Activated T-helper 1 cell treated with anti-CD3 and anti-CD28 coated beads, Interleukin-12 subunit alpha, Interleukin-12 subunit beta, Interleukin-2, Interleukin-4 antibody, amounts not matched to agents 30 ng/mL and 10 ng/mL and 1 ng/mL, durations not matched to agents 14 hours and 24 hours and 36 hours (primary cell): ENCODE measurements at regions of chr17 and their contacts with region 1.

Region 1: GRCh38 chr17:7214300-7215135 is 5.1 kb downstream of the DLG4 start:
- DNase-seq: peak; percentile 99
- H3K4me3 Mint-ChIP-seq: peak overlapping the region; percentile 91
- H3K27ac Mint-ChIP-seq: peak overlapping the region; percentile 98
- H3K4me1 Mint-ChIP-seq: peaks cover 55% of the 10 kb centered on the region
- H3K27me3 Mint-ChIP-seq: peaks cover 14% of the 10 kb centered on the region

Region 2: GRCh38 chr17:7234083-7234951 is 19.8 kb after region 1 on chr17 and contains the start of gene DVL2:
- intact Hi-C with region 1: loop called (anchors 1 kb)
- DNase-seq: peak; percentile 93
- H3K4me3 Mint-ChIP-seq: peak within 1 kb of the TSS; percentile 91
- H3K27ac Mint-ChIP-seq: peak within 1 kb of the TSS; percentile 92
- H3K4me1 Mint-ChIP-seq: peaks cover 46% of the 10 kb centered on the region
- H3K27me3 Mint-ChIP-seq: no peaks in the 10 kb centered on the region
- total RNA-seq, gene DVL2: 70.0 and 73.5 TPM in 2 replicates

Region 3: DNA sequence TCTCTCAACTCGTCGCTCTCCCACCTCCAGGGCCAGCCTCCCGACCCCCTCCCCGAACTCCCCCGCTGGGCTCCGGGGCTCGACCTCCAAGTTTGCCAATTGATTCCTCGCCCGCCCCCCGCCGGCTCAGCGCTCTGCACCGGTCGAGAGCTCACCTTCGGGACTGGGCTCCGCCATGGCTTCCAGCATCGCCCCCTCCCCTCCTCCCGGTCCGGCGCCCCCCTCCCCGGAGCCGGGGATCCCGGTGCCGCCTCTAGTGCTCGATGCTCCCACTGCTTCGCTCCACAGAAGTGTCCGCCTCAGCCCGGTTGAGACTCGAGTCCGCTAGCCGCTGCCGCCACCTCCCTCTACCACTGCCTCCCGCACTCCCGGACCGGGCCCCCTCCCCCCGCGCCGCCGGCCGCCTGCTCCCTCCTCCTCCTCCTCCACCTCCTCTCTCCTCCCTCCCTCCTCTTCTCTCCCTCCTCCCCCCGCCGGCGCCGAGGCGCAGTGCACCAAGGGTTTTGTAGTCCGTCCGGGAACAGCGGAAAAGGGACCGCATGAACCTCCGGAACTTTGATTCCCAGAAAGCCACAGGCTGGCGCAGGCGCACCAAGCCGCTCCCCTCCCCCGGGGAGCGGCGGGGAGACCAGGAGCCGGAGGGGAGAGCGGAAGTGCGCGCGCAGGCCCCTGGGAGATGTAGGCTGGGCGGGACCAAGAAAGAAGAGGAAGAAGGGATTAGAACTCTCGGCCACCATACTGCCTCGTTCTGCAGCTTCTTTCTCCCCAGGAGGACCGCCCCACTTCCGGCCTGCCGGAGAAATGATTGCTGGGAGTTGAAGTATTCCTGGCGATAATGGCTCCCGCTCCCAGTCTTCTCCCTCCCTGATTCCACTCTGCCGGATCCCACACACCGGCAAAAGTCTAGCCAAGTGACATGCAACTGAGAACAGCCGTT is 24.8 kb after region 1 on chr17 and contains the start of gene PHF23:
- intact Hi-C with region 1: loop called (anchors 1 kb)
- DNase-seq: peak; percentile 98
- H3K4me3 Mint-ChIP-seq: peak within 1 kb of the TSS; percentile 97
- H3K27ac Mint-ChIP-seq: peak within 1 kb of the TSS; percentile 94
- H3K4me1 Mint-ChIP-seq: peaks cover 68% of the 10 kb centered on the region
- H3K27me3 Mint-ChIP-seq: no peaks in the 10 kb centered on the region
- total RNA-seq, gene PHF23: 52.5 and 55.4 TPM in 2 replicates

Region 4: DNA sequence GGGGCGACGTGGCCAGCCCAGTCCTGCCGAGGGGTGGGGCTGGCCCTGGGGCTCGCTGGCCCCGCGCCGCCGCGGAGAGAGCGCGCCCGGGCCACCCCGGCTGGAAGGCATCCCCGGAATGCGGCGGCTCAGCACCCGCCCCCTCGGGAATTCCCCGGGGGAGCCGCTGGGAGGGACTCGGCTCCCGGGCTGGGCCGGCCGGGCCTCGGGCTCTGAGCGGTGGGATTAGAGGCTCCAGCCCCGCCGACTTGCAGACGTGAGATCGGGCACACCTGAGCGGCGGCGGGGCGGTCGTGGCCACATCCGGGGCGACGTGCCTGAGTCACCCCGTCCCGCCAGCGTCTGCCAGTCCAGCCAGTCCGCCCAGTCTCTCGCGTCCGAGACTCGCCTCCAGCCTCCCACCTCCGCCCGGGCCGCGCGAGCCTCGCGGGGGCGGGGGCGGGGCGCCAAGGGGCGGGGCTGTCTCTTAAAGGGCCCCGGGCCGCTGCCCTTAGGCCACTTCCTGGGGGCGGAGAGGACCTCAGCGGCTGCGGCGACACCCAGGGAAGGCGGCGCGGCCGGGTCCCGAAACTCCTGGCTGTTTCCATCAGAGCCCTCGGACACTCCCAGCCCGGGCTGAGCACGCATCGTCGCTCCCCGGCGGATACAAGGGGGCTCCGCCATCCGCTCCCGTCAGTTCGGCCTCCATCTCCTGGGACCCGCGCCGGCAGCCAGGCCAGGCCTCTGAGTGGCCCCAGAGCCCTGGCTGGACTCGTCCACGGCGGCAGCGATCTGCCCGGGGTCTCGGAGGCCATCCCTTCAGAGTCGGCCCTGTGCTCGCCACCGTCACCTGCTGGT is 137.4 kb after region 1 on chr17 and contains the start of gene KCTD11:
- intact Hi-C with region 1: no loop called
- DNase-seq: peak; percentile 76
- H3K4me3 Mint-ChIP-seq: peak within 1 kb of the TSS; percentile 84
- H3K27ac Mint-ChIP-seq: peak within 1 kb of the TSS; percentile 87
- H3K4me1 Mint-ChIP-seq: peaks cover 41% of the 10 kb centered on the region
- H3K27me3 Mint-ChIP-seq: no peaks in the 10 kb centered on the region
- total RNA-seq, gene KCTD11: 5.3 TPM in 2 replicates